HepG2 (cell line): ENCODE measurements at regions of chr1 and their contacts with region 1.

Region 1: GRCh38 chr1:9874959-9875635 is 35.0 kb downstream of the CTNNBIP1 start:
- DNase-seq: peak; percentile 68
- ATAC-seq: peak; percentile 84
- H3K4me3 ChIP-seq: peak overlapping the region in 1 of 3 experiments; percentile 23; a peak in 1 of 6 replicates
- H3K27ac ChIP-seq: peak overlapping the region; percentile 41
- H3K4me1 ChIP-seq: peaks cover 45% of the 10 kb centered on the region
- H3K27me3 ChIP-seq: no peaks in the 10 kb centered on the region
- CTCF ChIP-seq: peak; percentile 94
- EP300 ChIP-seq: no peak
- POLR2A ChIP-seq: no peak
- RAD21 ChIP-seq: peak; percentile 94

Region 2: GRCh38 chr1:9629445-9630201 is 245.5 kb before region 1 on chr1:
- CTCF ChIA-PET with region 1: no interaction called
- POLR2A ChIA-PET with region 1: no interaction called
- in situ Hi-C with region 1: no loop called
- intact Hi-C with region 1: no loop called
- DNase-seq: no peak
- ATAC-seq: peak; percentile 12
- H3K4me3 ChIP-seq: peak overlapping the region in 2 of 3 experiments; percentile 2 to 40; a peak in 1 of 6 replicates
- H3K27ac ChIP-seq: no peak overlapping the region
- H3K4me1 ChIP-seq: peaks cover 29% of the 10 kb centered on the region
- H3K27me3 ChIP-seq: peaks cover 0 to 23% of the 10 kb centered on the region in 2 experiments; a peak in 4 of 5 replicates
- CTCF ChIP-seq: no peak
- EP300 ChIP-seq: no peak
- POLR2A ChIP-seq: no peak
- RAD21 ChIP-seq: no peak

Region 3: DNA sequence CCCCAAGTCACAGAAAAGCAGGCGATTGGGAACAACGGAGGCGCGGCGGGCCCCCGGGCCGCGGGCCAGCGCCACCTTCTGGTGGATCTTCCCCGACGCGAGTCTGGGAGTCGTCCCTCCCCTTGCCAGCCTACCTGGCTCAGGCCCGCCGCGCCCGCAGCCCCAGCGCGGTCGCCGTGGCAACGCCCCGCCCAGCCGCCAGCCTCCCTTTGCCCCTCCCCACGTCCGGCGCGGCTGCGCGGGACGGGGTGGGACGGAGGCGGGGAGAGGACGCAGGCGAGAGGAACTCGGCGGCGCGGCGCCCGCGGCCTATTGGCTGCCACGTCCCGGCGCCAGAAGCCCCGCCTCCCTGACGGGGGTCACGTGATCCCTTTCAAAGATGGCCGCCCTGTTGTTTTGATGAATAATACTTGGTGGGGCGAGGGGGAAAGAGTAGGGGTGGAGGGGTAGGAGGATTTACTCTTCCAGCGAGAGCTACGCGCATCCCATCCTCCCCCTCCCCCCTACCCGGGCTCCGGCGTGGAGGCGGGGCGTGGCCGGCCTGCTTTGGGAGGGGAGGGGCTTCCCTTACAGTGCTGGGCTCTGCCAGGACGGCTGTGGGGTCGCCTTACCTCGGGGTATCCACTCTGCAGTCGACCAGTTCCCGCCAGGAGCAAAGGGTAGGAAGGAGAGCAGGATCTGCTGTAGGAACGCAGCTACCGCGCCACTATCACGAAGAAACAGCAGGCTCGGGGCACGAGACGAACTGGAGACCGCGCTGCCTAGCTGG is 157.7 kb after region 1 on chr1 and contains the start of gene UBE4B:
- CTCF ChIA-PET with region 1: interaction called, 16 read pairs
- POLR2A ChIA-PET with region 1: no interaction called
- in situ Hi-C with region 1: loop called (anchors 10 kb)
- intact Hi-C with region 1: loop called (anchors 1 kb)
- DNase-seq: peak; percentile 94
- ATAC-seq: peak; percentile 95
- H3K4me3 ChIP-seq: peak within 1 kb of the TSS; percentile 70 to 89 (median 84)
- H3K27ac ChIP-seq: peak within 1 kb of the TSS; percentile 84
- H3K4me1 ChIP-seq: peaks cover 11% of the 10 kb centered on the region
- H3K27me3 ChIP-seq: no peaks in the 10 kb centered on the region; a peak in 1 of 5 replicates
- CTCF ChIP-seq: peak; percentile 93
- EP300 ChIP-seq: no peak
- POLR2A ChIP-seq: peak; percentile 55 to 65
- RAD21 ChIP-seq: peak; percentile 95
- total RNA-seq, gene UBE4B: 24.8 and 32.0 TPM in 2 replicates

Region 4: GRCh38 chr1:10128101-10128765 is 253.1 kb after region 1 on chr1:
- CTCF ChIA-PET with region 1: no interaction called
- POLR2A ChIA-PET with region 1: no interaction called
- in situ Hi-C with region 1: no loop called
- intact Hi-C with region 1: no loop called
- DNase-seq: no peak
- ATAC-seq: no peak
- H3K4me3 ChIP-seq: no peak overlapping the region
- H3K27ac ChIP-seq: no peak overlapping the region
- H3K4me1 ChIP-seq: 0 out of 2 replicates have a peak, but pooled peaks cover 7% of the 10 kb centered on the region
- H3K27me3 ChIP-seq: no peaks in the 10 kb centered on the region; a peak in 1 of 5 replicates
- CTCF ChIP-seq: no peak
- EP300 ChIP-seq: no peak
- POLR2A ChIP-seq: no peak
- RAD21 ChIP-seq: no peak